HEK293 (cell line): ENCODE measurements at regions of chr19 and their contacts with region 1.

Region 1: DNA sequence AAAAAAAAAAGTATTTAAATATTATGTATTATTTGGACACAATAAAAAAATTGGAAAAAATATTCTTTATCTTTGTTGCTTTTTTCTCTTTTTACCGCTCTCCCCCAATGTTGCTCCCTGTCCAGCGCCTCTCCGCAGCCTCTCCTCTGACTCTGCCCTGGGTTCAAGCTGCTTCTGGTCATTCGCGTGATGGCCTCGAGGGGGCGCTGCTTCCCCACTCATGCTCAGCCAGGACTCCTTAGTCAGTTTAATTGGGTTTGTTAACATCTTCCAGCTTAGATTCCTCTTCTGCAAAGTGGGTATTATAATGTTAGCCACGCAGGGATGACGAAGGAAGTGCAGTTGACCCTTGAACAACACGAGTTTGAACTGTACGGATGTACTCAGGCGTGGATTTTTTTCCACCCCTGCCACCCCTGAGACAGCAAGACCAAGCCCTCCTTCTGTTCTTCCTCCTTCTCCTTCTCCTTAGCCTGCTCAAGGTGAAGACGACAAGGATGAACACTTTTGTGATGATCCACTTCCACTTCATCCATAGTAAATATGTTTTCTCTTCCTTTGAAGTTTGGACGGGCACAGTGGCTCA is 4.9 kb upstream of the NWD1 start:
- H3K4me3 ChIP-seq: no peak overlapping the region
- H3K27ac ChIP-seq: no peak overlapping the region
- H3K4me1 ChIP-seq: no peaks in the 10 kb centered on the region
- CTCF ChIP-seq: peak; percentile 78

Region 2: DNA sequence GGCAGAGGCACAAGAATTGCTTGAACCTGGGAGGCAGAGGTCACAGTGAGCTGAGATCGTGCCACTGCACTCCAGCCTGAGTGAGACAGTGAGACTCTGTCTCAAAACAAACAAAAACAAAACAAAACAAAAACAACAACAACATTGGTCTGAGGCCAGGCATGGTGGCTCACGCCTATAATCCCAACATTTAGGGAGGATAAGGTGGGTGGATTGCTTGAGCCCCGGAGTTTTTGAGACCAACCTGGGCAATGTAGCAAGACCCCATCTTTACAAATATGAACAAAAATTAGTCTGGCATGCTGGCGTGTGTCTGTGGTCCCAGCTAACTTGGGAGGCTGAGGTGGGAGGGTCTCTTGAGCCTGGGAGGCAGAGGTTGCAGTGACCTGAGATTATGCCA is 11.1 kb before region 1 on chr19:
- CTCF ChIA-PET with region 1: interaction called, 16 read pairs
- POLR2A ChIA-PET with region 1: no interaction called
- H3K4me3 ChIP-seq: no peak overlapping the region
- H3K27ac ChIP-seq: no peak overlapping the region
- H3K4me1 ChIP-seq: no peaks in the 10 kb centered on the region
- CTCF ChIP-seq: no peak

Region 3: DNA sequence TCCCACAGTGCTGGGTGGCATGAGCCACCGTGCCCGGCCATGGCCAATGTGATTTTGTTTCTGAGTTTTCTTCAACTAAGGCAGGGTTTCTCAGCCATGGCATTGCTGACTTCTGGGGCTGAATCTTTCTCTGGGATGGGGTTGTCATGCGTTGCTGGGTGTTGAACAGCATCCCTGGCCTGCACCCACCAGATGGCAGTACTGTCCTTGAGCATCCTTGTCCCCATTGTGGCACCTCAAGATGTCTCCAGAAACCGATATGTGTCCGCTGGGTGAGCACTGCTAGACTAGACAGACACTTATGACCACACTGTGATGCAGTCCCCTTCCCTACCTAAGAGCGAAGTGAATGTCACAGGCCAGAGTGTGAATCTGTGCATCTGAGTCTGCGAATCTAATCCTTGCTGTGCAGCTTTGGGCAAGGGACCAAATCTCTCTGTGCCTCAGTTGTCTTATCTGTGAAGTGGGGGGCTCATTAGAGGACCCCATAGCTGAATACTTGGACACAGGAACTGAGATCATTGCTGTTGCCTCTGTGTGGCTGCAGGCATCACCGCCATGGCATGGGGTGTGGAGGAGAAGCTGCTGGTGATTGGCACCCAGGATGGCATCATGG is 64.1 kb after region 1 on chr19:
- CTCF ChIA-PET with region 1: interaction called, 15 read pairs
- POLR2A ChIA-PET with region 1: no interaction called
- H3K4me3 ChIP-seq: no peak overlapping the region
- H3K27ac ChIP-seq: no peak overlapping the region
- H3K4me1 ChIP-seq: no peaks in the 10 kb centered on the region
- CTCF ChIP-seq: peak; percentile 87

Region 4: DNA sequence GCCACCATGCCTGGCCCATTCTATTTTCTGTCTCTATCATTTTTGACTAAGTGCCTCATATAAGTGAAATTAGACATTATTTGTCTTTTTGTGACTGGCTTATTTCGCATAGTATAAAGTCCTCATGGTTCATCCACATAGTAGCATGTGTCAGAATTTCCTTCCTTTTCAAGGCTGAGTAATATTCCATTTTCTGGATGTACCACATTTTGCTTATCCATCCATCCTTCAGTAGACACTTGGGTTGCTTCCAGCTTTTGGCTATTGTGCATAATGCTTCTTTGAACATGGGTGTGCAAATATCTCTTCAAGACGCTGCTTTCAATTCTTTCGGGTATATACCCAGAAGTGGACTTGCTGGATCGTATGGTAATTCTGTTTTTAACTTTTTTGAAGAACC is 448.9 kb after region 1 on chr19:
- CTCF ChIA-PET with region 1: interaction called, 14 read pairs
- POLR2A ChIA-PET with region 1: no interaction called
- H3K4me3 ChIP-seq: no peak overlapping the region
- H3K27ac ChIP-seq: no peak overlapping the region
- H3K4me1 ChIP-seq: no peaks in the 10 kb centered on the region
- CTCF ChIP-seq: no peak